PC-9 (cell line): ENCODE measurements at regions of chr7 and their contacts with region 1.

Region 1: DNA sequence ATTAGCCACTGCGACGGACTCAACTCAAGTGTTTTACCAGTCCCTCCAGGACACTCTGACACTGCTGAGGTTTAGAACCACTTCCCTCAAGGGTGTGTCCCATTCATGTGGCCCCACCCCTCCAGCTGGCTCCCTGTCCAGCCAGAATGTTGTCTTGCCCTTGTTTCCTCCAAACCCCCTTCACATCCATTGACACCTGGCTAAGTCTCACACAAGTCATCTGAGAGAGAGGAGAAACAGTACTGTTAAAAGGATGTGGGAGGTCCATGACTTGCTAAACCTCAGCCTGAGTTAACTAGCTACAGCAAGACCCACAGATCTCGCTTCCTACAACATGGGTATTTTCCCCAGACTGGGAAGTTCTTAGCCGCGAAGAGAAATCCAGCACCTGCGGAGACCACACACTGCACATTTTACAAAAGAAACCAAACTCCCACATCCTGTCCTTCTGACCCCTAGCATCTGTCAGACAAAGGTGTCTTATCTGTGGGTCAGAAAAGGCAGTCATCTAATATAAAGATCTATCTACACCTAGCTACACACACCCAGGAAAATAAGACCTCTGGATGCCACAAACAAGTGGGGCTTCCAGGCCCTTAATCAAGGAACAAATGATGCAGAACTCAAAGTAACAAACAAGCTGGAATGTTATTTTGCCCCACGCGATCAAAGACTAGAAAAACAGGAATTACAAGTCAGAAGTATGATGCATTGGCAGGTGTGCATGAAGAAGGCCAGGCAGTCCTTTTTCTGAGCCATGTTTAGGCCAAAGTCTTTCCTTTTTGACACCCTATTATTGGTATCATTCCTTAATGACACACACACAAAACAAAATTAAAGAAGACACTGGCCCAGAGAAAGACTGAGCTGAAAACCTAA is 13.9 kb downstream of the OSBPL3 start:
- DNase-seq: peak; percentile 72 to 95
- H3K4me3 ChIP-seq: peak overlapping the region; percentile 10; the same call in 1 of the 2 replicates
- H3K27ac ChIP-seq: peak overlapping the region; percentile 63
- H3K4me1 ChIP-seq: peaks cover 56% of the 10 kb centered on the region
- H3K27me3 ChIP-seq: no peaks in the 10 kb centered on the region
- CTCF ChIP-seq: no peak

Region 2: DNA sequence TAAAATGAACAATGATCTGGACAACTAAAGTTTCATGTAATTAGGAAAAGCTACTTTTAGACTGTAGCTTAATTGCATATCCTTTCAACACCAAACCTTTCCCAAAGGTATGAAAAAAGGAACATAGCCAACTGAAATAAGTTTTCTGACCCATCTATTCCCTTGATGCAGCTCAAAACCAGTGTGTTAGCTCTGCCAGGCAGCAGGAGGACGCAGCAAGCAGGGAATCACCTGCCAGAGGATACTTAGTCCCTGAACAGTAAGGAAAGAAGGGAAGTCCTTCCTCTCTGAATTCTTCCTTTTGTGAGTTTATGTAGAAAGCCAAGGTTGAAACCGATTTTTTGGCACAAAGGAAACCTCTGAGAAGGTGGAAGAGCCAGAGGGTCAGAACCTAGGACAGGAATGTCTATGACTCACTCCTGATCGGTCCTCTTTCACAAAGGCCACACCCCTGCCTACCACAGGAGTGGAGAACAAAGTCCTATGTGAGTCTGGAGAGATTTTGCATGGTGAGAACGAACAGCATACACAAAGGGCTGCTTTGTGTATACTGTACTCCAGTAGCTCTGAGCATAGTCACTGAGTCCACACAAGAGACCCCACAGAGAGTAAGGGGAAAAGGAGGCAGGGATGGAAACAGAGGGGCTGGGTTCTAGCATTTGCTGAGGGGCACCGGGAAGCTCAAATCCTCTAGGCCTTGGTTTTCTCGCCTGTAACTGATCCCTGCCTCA is 140.0 kb before region 1 on chr7:
- CTCF ChIA-PET with region 1: no interaction called
- POLR2A ChIA-PET with region 1: interaction called, 10 read pairs
- intact Hi-C with region 1: loop called (anchors 2 kb)
- DNase-seq: peak; percentile 82 to 98
- H3K4me3 ChIP-seq: peak overlapping the region; percentile 10; the same call in 1 of the 2 replicates
- H3K27ac ChIP-seq: peak overlapping the region; percentile 90
- H3K4me1 ChIP-seq: peaks cover 57% of the 10 kb centered on the region
- H3K27me3 ChIP-seq: no peaks in the 10 kb centered on the region
- CTCF ChIP-seq: no peak

Region 3: GRCh38 chr7:24851786-24852185 is 114.3 kb before region 1 on chr7:
- CTCF ChIA-PET with region 1: no interaction called
- POLR2A ChIA-PET with region 1: no interaction called
- intact Hi-C with region 1: no loop called
- DNase-seq: peak in 1 of 2 experiments; percentile 17
- H3K4me3 ChIP-seq: no peak overlapping the region
- H3K27ac ChIP-seq: no peak overlapping the region
- H3K4me1 ChIP-seq: peaks cover 12% of the 10 kb centered on the region
- H3K27me3 ChIP-seq: no peaks in the 10 kb centered on the region
- CTCF ChIP-seq: no peak

Region 4: GRCh38 chr7:24907311-24907886 is 58.7 kb before region 1 on chr7:
- CTCF ChIA-PET with region 1: interaction called, 5 read pairs
- POLR2A ChIA-PET with region 1: no interaction called
- intact Hi-C with region 1: loop called (anchors 1 kb)
- DNase-seq: peak; percentile 47 to 88
- H3K4me3 ChIP-seq: peak overlapping the region; percentile 21
- H3K27ac ChIP-seq: peak overlapping the region; percentile 86
- H3K4me1 ChIP-seq: peaks cover 58% of the 10 kb centered on the region
- H3K27me3 ChIP-seq: no peaks in the 10 kb centered on the region
- CTCF ChIP-seq: no peak

Region 5: DNA sequence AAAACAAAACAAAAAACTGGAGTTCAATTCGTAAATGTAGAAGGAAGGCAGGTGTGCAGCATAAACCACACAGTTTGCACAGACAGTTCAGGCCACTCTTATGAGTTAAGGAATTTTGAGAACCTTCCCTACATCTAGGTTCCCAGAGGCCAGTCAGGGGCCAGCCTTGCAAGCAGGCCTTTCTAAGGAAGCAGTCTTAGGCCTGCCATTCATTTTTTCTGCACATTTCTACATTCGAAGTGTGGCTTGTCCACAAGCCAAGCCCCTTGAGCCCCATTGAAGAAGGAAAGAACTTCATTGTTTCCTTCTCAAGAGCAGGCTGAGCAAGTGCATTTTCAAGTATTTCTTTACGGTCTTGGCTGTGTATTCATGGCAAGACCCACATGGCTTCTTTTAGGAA is 25.3 kb after region 1 on chr7:
- CTCF ChIA-PET with region 1: no interaction called
- POLR2A ChIA-PET with region 1: no interaction called
- intact Hi-C with region 1: no loop called
- DNase-seq: peak in 1 of 2 experiments; percentile 18
- H3K4me3 ChIP-seq: no peak overlapping the region
- H3K27ac ChIP-seq: no peak overlapping the region
- H3K4me1 ChIP-seq: no peaks in the 10 kb centered on the region
- H3K27me3 ChIP-seq: no peaks in the 10 kb centered on the region
- CTCF ChIP-seq: no peak

Region 6: DNA sequence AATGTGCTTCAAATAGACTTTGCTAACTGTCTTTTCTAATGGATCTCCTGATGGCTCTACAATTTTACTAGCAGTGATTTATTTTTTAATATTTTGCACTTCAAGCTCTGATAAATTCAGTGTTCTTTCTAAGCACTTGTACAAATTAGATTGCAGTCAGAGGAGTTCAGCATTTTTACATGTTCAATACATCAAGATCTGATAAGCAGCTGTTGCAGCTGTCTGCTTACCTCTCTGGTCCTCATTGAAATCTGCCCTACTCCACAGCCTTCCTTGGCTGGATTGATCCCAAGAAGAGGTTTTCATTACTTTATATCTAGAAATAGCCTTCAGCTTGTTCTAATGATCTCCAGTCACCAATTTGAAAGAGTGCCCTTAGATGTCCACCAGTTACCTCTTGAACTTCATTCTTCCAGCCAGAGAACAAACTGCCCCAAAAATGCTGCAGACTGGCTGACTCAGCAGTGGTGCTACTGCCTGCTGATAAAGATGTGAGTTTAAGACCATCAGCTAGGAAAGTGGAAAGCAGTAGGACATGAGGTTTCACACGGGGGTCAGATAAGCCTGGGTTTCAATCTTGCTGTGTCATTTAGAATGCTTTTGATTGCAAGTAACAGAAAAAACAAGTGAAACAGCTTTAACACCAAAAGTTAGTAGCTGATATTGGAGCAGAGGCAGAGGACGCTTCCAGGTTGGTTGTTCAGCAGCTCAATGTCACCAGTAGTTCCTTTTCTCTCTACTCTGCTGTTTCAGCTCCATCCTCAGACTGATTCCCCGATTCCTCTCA is 613.1 kb after region 1 on chr7:
- CTCF ChIA-PET with region 1: no interaction called
- POLR2A ChIA-PET with region 1: no interaction called
- intact Hi-C with region 1: no loop called
- DNase-seq: no peak
- H3K4me3 ChIP-seq: no peak overlapping the region
- H3K27ac ChIP-seq: no peak overlapping the region
- H3K4me1 ChIP-seq: no peaks in the 10 kb centered on the region
- H3K27me3 ChIP-seq: peaks cover 73% of the 10 kb centered on the region
- CTCF ChIP-seq: no peak